HEK293 (cell line): ENCODE measurements at regions of chr19 and their contacts with region 1.

Region 1: DNA sequence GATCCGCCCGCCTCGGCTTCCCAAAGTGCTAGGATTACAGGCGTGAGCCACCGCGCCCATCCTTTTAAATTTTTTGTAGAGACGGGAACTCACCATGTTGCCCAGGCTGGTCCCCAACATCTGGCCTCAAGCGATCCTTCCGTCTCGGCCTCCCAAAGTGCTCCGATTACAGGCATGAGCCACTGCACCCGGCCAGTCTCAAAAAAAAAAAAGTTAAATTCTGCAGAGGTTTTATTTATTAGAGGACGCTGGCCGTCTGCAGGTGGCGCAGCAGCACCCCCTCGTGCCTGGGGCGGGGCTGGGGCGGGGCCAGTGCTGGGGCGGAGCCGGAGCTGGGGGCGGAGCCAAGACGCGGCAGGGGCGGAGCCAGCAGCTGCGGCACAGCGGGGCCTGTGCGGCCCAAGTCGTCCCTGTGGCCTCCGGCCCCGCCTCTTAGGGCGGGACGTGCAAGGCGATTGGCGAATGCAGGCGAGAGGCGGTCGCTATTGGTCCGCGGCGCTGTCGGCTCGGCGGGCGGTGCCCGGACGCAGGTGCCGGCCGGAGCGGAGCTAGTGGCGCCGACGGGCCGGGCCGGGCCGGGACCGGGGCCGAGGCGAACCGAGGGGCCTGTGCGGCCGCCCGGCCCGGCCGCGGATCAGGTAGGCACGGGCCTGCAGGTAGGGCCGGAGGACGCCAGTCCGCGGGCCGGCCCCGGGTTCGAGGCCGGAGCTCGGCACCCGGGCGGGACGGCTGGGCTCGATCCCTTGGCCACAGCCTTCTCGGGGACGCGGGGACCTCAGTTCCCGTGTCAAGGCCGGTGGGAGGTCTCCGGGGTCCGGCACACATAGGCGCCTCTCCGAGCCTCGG is at the start of gene MARCHF2:
- H3K4me3 ChIP-seq: peak within 1 kb of the TSS; percentile 62
- H3K27ac ChIP-seq: no peak within 1 kb of the TSS; the same call in 1 of the 2 replicates
- H3K4me1 ChIP-seq: peaks cover 2% of the 10 kb centered on the region; the same call in 1 of the 2 replicates
- CTCF ChIP-seq: peak; percentile 42

Region 2: DNA sequence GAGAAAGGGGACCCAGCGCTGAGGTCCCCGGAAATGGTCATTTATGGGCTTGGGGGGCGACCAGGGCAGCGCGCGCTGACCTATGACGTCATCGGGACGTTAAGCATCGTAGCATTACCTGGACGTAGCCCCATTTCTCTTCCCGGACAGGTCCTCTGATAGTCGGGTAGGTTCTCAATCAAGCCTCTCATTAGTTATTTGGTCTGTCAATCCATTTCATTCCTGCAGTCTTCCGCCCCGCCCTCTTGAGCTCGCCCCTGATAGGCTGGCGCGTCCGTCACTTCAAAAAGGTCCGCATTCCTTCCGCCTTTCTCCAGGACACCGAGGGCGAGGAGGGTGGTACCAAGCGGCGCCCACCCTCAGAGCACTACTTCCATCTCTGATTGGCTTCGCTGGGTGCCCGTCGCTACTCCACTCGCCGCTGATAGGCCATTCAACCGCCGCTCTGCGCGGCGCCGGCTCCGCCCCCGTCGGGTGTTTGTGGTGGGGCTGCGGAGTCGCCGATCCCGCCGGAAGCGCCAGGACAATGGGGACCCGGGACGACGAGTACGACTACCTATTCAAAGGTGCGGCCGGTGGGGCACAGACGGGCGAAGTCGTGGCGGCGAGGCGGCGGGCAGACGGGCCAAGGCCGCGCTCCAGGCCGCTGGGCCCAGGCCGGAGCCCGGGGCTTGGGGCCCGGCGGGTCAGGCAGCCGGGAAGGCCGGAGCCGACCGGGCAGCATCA is 23.0 kb before region 1 on chr19 and contains the start of gene RAB11B:
- CTCF ChIA-PET with region 1: interaction called, 4 read pairs
- POLR2A ChIA-PET with region 1: interaction called, 11 read pairs
- H3K4me3 ChIP-seq: peak within 1 kb of the TSS; percentile 97
- H3K27ac ChIP-seq: peak within 1 kb of the TSS; percentile 98
- H3K4me1 ChIP-seq: peaks cover 3% of the 10 kb centered on the region; the same call in 1 of the 2 replicates
- CTCF ChIP-seq: no peak

Region 3: GRCh38 chr19:8396563-8397203 is 16.3 kb before region 1 on chr19:
- CTCF ChIA-PET with region 1: interaction called, 11 read pairs
- POLR2A ChIA-PET with region 1: no interaction called
- H3K4me3 ChIP-seq: no peak overlapping the region
- H3K27ac ChIP-seq: no peak overlapping the region
- H3K4me1 ChIP-seq: no peaks in the 10 kb centered on the region
- CTCF ChIP-seq: peak; percentile 86

Region 4: GRCh38 chr19:8423817-8424223 is 10.8 kb after region 1 on chr19:
- CTCF ChIA-PET with region 1: interaction called, 17 read pairs
- POLR2A ChIA-PET with region 1: interaction called, 48 read pairs
- H3K4me3 ChIP-seq: no peak overlapping the region
- H3K27ac ChIP-seq: no peak overlapping the region
- H3K4me1 ChIP-seq: peaks cover 4% of the 10 kb centered on the region
- CTCF ChIP-seq: no peak

Region 5: GRCh38 chr19:8444645-8445487 is 31.9 kb after region 1 on chr19 and contains the start of gene HNRNPM:
- CTCF ChIA-PET with region 1: interaction called, 4 read pairs
- POLR2A ChIA-PET with region 1: interaction called, 47 read pairs
- H3K4me3 ChIP-seq: peak within 1 kb of the TSS; percentile 95
- H3K27ac ChIP-seq: peak within 1 kb of the TSS; percentile 88
- H3K4me1 ChIP-seq: peaks cover 12% of the 10 kb centered on the region
- CTCF ChIP-seq: no peak

Region 6: GRCh38 chr19:8505680-8506401 is 92.8 kb after region 1 on chr19:
- CTCF ChIA-PET with region 1: interaction called, 14 read pairs
- POLR2A ChIA-PET with region 1: interaction called, 9 read pairs
- H3K4me3 ChIP-seq: peak overlapping the region; percentile 61
- H3K27ac ChIP-seq: peak overlapping the region; percentile 44; the same call in 1 of the 2 replicates
- H3K4me1 ChIP-seq: peaks cover 3% of the 10 kb centered on the region; the same call in 1 of the 2 replicates
- CTCF ChIP-seq: peak; percentile 91

Region 7: GRCh38 chr19:8513687-8514504 is 100.9 kb after region 1 on chr19 and contains the start of gene ZNF414:
- CTCF ChIA-PET with region 1: interaction called, 3 read pairs
- POLR2A ChIA-PET with region 1: interaction called, 14 read pairs
- H3K4me3 ChIP-seq: peak within 1 kb of the TSS; percentile 99
- H3K27ac ChIP-seq: peak within 1 kb of the TSS; percentile 87
- H3K4me1 ChIP-seq: peaks cover 7% of the 10 kb centered on the region; the same call in 1 of the 2 replicates
- CTCF ChIP-seq: no peak